A549 (cell line): ENCODE measurements at regions of chr17 and their contacts with region 1.

Region 1: DNA sequence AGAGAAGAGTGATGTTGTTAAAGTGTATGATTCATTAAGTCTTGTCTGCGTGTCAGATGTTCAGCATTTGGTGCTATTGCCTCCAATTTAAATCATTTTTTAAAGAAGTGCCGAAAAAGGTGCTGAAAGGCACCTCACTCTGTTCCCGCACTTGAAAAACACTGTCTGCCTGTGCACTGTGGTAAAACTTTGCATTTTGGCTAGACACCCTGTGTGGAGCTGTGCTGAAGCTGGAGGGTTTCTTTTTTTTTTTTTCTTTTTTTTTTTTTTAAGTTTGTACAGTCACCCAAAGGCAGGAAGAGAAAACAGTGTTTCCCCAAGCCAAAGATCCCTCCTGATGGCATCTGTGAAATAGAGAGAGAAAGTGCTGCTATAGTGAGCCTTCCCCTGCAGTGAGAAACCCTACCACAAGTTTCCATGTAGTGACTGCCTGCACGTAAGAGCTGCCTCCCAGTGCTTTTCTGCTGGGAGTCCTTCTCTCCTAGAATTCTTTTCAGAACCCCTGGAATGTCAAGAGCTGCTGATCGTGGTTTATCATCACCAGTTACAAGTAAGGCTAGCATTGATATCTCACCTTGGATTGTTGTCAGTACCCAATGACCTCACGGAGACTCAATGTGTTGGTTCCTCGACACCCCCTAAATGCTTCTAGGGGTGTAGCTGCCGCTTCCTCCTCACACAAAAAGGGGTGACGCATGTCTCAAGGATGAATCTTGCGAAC is 116.0 kb upstream of the SOX9 start:
- DNase-seq: no peak
- ATAC-seq: peak in 1 of 2 experiments; percentile 44; a peak in 2 of 6 replicates
- H3K4me3 ChIP-seq: no peak overlapping the region
- H3K27ac ChIP-seq: peak overlapping the region in 1 of 2 experiments; percentile 35; a peak in 3 of 6 replicates
- H3K4me1 ChIP-seq: peaks cover 27% of the 10 kb centered on the region
- CTCF ChIP-seq: no peak
- EP300 ChIP-seq: no peak
- POLR2A ChIP-seq: no peak
- RAD21 ChIP-seq: no peak

Region 2: GRCh38 chr17:71963791-71964190 is 41.0 kb before region 1 on chr17:
- CTCF ChIA-PET with region 1: no interaction called
- POLR2A ChIA-PET with region 1: interaction called, 11 read pairs
- DNase-seq: no peak
- ATAC-seq: no peak
- H3K4me3 ChIP-seq: no peak overlapping the region
- H3K27ac ChIP-seq: no peak overlapping the region
- H3K4me1 ChIP-seq: no peaks in the 10 kb centered on the region
- CTCF ChIP-seq: no peak
- EP300 ChIP-seq: no peak
- POLR2A ChIP-seq: no peak
- RAD21 ChIP-seq: no peak

Region 3: GRCh38 chr17:72145981-72146380 is 141.2 kb after region 1 on chr17:
- CTCF ChIA-PET with region 1: no interaction called
- POLR2A ChIA-PET with region 1: no interaction called
- DNase-seq: peak in 1 of 2 experiments; percentile 45
- ATAC-seq: peak; percentile 49 to 80; a peak in 5 of 6 replicates
- H3K4me3 ChIP-seq: no peak overlapping the region
- H3K27ac ChIP-seq: 0 out of 6 replicates have a peak overlapping the region, but pooled peaks of 1 of the 2 experiments have one; percentile 10
- H3K4me1 ChIP-seq: peaks cover 19% of the 10 kb centered on the region
- CTCF ChIP-seq: no peak
- EP300 ChIP-seq: no peak
- POLR2A ChIP-seq: no peak
- RAD21 ChIP-seq: no peak